ENCODE measurements at regions of chr22 and their contacts with region 1.

Region 1: DNA sequence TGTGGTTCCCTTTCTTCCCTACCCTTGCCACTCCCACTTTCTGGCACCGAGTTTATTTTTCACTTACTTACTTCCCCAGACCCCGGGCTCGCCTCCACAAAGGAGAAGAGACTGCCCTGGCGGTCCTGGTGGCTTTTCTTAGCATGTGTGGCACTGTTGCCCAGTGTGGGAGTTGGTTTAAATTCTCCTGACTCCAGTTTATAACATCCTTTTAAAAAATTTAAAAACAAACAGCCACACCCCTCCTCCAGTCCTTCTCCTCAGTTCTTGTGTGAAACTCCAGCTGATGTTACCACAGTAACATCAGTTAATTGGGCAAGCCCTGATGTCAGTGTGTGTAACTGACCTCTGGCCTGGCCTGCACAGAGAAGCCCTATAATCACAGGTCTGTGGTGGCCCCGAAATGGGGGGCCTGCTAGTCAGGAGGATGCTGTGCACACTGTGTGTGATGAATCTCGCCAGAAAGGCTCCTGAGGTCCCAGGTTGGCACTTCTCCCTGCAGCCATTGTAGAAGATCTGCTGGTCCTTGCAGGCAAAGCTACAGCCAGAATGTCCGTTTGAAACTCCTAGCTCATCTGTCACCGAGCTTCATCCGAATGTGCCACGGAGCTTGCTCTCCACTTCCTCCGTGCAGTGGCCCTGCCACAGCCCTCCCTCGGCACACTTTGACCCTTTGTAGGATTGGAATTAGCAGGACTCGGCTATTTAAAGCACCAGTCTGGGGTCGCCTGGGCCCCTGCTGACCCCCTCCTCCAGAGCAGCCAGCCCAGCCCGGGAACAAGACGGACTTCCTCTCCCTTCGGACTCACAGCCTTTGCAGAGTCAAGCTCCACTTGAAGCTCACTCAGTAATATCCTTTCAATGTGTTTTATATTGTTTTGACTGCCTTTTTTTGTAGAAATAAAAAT is 7.6 kb downstream of the YDJC start:
- DNase-seq: peak in 1 of 10 donors; percentile 19
- H3K4me3 ChIP-seq: no peak overlapping the region
- H3K27ac ChIP-seq: peak overlapping the region in 51 of 59 donors; percentile 7 to 88 (median 74)
- H3K27me3 ChIP-seq: no peaks in the 10 kb centered on the region
- CTCF ChIP-seq: no peak

Region 2: DNA sequence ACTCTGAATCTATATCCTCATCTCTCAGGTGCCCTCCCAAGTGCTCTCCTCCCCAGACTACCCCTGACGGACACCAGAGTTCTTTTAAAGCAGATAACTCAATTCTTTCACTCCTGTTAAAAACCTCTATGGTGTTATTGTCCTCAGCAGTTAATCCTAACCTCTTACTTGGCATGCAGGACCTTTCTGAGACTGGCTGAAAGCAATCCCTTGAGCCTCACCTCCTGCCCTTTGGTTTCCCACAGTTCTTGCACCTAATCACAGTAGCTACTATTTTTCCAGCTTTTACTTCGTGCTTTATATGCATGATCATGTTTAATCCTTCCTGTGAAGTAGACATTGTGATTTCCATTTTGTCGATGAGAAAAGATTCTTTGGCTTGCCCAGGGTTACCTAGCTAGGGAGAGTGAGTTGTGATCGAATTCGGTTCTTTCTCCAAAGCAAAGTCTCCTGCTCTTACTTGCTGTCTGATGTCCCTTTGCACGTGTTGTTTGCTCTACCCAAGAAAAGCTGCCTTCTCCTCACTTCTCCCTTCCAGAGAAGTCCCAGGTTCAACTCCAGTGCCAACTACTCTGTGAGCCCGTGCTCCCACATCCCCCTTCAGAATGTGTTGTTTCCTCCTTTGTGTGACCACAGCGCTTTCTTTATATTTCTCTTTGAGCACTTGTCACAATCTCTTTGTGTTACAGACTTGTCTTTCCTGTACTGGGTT is 52.6 kb before region 1 on chr22:
- intact Hi-C with region 1: loop called in 1 of 2 experiments (anchors 2 kb)
- DNase-seq: no peak
- H3K4me3 ChIP-seq: peak overlapping the region in 38 of 59 donors; percentile 3 to 99 (median 88)
- H3K27ac ChIP-seq: peak overlapping the region in 2 of 59 donors; percentile 6 to 17
- H3K27me3 ChIP-seq: no peaks in the 10 kb centered on the region
- CTCF ChIP-seq: no peak

Region 3: GRCh38 chr22:21791635-21792625 is 169.7 kb after region 1 on chr22:
- intact Hi-C with region 1: no loop called
- DNase-seq: no peak
- H3K4me3 ChIP-seq: no peak overlapping the region
- H3K27ac ChIP-seq: peak overlapping the region in 13 of 59 donors; percentile 0 to 44 (median 10)
- H3K27me3 ChIP-seq: no peaks in the 10 kb centered on the region
- CTCF ChIP-seq: no peak